ENCODE measurements at regions of chr14 and their contacts with region 1.

Region 1: DNA sequence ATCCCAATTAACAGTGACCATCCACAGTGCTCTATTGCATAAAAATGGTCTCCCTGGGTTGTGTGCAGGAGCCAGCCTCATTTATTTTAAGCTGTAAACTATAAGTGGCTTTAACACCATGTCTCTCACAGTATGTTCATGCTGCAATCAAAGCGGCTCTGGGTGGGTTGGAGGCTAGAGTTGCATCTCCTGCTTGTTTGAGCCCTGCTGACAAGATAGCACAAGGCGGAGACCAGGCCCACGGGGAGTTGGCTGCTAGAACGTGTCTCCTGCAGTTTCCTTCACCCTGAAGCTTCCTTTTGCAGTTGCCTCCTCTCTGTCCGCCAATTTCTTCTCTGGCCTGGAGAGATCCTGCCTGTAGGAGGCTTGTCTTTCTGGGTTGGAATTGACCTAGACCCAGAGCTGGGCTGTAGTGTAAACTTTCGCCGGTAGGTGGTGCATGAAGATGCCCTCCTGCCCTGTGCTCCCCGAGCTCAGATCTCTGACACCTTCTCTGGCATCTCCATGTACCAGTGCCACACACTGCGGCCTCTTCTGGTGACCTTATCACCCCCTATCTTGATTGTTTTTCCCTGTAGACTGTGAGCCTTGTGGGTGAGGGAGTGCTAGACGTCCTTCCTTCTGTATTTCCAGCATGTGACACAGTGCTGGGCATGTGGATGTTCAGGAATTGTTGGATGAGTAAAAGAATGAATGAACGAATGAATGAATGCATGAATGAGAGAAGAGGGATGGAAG is 10.3 kb downstream of the OTUB2 start:
- DNase-seq: peak; percentile 34
- H3K4me3 ChIP-seq: no peak overlapping the region
- H3K27ac ChIP-seq: no peak overlapping the region
- H3K27me3 ChIP-seq: no peaks in the 10 kb centered on the region
- CTCF ChIP-seq: peak; percentile 84

Region 2: GRCh38 chr14:94026173-94026888 is 10.2 kb before region 1 on chr14 and contains the start of gene OTUB2:
- CTCF ChIA-PET with region 1: interaction called, 39 read pairs
- POLR2A ChIA-PET with region 1: no interaction called
- DNase-seq: peak; percentile 95
- H3K4me3 ChIP-seq: peak within 1 kb of the TSS; percentile 66
- H3K27ac ChIP-seq: no peak within 1 kb of the TSS
- H3K27me3 ChIP-seq: no peaks in the 10 kb centered on the region
- CTCF ChIP-seq: no peak
- polyA plus RNA-seq, gene OTUB2: 2.1 and 2.3 TPM in 2 replicates

Region 3: GRCh38 chr14:94056579-94057308 is 20.3 kb after region 1 on chr14:
- CTCF ChIA-PET with region 1: interaction called, 65 read pairs
- POLR2A ChIA-PET with region 1: no interaction called
- DNase-seq: no peak
- H3K4me3 ChIP-seq: no peak overlapping the region
- H3K27ac ChIP-seq: no peak overlapping the region
- H3K27me3 ChIP-seq: no peaks in the 10 kb centered on the region
- CTCF ChIP-seq: no peak

Region 4: DNA sequence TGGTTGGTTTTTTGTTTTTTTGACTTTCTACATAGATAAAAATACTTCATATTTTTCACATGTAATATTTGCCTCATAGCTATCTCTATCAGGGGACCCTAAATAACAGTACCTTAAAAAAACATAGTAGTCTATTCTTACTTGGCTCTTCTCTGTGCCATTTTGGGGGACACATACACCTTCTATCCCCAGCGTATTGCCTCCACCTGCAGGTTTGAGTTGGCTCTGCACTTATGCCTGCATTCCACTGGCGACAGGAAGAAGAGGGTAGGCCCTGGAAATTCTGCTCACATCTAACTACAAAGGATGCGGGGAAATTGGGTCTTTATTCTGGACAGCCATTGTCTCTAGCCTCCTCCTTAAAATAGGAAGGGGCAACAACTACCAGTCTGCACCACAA is 106.8 kb after region 1 on chr14:
- CTCF ChIA-PET with region 1: interaction called, 183 read pairs
- POLR2A ChIA-PET with region 1: no interaction called
- DNase-seq: no peak
- H3K4me3 ChIP-seq: no peak overlapping the region
- H3K27ac ChIP-seq: no peak overlapping the region
- H3K27me3 ChIP-seq: no peaks in the 10 kb centered on the region
- CTCF ChIP-seq: peak; percentile 44

Measured in AG04450 (cell line).